B cell (primary cell): ENCODE measurements at regions of chrX and their contacts with region 1.

Region 1: DNA sequence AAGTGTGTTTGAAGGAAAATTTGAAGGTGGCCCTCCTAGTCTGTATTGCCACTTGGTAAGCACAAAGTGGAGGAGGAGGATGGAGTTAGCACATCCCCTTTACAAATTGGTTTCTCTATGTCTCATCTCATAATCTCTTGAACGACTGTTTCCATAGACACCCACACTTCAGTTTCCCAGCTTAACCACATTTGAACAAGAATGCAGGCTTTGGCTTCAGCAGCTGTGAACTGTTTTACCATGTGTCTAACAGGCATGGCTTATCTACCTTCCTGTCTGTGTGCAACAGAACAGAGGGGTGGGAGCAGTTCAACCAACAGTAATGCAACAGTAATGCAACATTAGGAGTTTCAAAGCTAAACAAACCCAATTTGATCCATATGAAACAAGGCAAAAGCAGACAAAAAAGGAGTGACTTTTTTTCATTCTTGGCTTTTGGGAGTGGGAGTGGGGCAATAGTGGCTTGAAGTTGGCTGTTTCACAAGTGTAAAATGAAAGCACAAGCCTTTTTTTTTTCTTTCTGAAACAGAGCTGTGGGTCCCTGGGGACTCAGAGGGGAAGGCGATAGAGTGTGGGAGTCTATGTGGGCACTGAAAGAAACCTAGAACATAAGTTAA is 108.0 kb downstream of the ITM2A start:
- DNase-seq: peak; percentile 82
- ATAC-seq: peak; percentile 89
- H3K4me3 ChIP-seq: peak overlapping the region in 3 of 5 experiments; percentile 19 to 43 (median 26)
- H3K4me3 Mint-ChIP-seq: peak overlapping the region; percentile 77
- H3K27ac ChIP-seq: peak overlapping the region; percentile 51 to 76
- H3K27ac Mint-ChIP-seq: peak overlapping the region; percentile 90
- H3K4me1 ChIP-seq: peaks cover 34 to 42% of the 10 kb centered on the region in 2 donors
- H3K4me1 Mint-ChIP-seq: peaks cover 65% of the 10 kb centered on the region
- H3K27me3 ChIP-seq: no peaks in the 10 kb centered on the region
- H3K27me3 Mint-ChIP-seq: no peaks in the 10 kb centered on the region
- CTCF ChIP-seq: no peak

Region 2: GRCh38 chrX:79096145-79096556 is 163.0 kb before region 1 on chrX:
- CTCF ChIA-PET with region 1: interaction called, 3 read pairs
- POLR2A ChIA-PET with region 1: no interaction called
- intact Hi-C with region 1: loop called (anchors 5 kb)
- DNase-seq: no peak
- ATAC-seq: no peak
- H3K4me3 ChIP-seq: no peak overlapping the region
- H3K4me3 Mint-ChIP-seq: peak overlapping the region; percentile 34
- H3K27ac ChIP-seq: peak overlapping the region; percentile 12 to 44
- H3K27ac Mint-ChIP-seq: peak overlapping the region; percentile 75
- H3K4me1 ChIP-seq: peaks cover 13 to 17% of the 10 kb centered on the region in 2 donors
- H3K4me1 Mint-ChIP-seq: peaks cover 45% of the 10 kb centered on the region
- H3K27me3 ChIP-seq: no peaks in the 10 kb centered on the region
- H3K27me3 Mint-ChIP-seq: no peaks in the 10 kb centered on the region
- CTCF ChIP-seq: no peak